ENCODE measurements at regions of chr11 and their contacts with region 1.

Region 1: GRCh38 chr11:62169091-62169847 is 20.7 kb upstream of the SCGB1D1 start:
- DNase-seq: no peak
- H3K4me3 Mint-ChIP-seq: no peak overlapping the region
- H3K27ac Mint-ChIP-seq: no peak overlapping the region
- H3K4me1 Mint-ChIP-seq: peaks cover 4% of the 10 kb centered on the region
- H3K27me3 Mint-ChIP-seq: peaks cover 36% of the 10 kb centered on the region

Region 2: GRCh38 chr11:62157603-62158002 is 11.7 kb before region 1 on chr11:
- intact Hi-C with region 1: no loop called
- DNase-seq: no peak
- H3K4me3 Mint-ChIP-seq: no peak overlapping the region
- H3K27ac Mint-ChIP-seq: no peak overlapping the region
- H3K4me1 Mint-ChIP-seq: no peaks in the 10 kb centered on the region
- H3K27me3 Mint-ChIP-seq: peaks cover 32% of the 10 kb centered on the region

Region 3: GRCh38 chr11:62208785-62209144 is 39.5 kb after region 1 on chr11:
- intact Hi-C with region 1: loop called (anchors 2 kb)
- DNase-seq: no peak
- H3K4me3 Mint-ChIP-seq: no peak overlapping the region
- H3K27ac Mint-ChIP-seq: no peak overlapping the region
- H3K4me1 Mint-ChIP-seq: no peaks in the 10 kb centered on the region
- H3K27me3 Mint-ChIP-seq: no peaks in the 10 kb centered on the region

Region 4: DNA sequence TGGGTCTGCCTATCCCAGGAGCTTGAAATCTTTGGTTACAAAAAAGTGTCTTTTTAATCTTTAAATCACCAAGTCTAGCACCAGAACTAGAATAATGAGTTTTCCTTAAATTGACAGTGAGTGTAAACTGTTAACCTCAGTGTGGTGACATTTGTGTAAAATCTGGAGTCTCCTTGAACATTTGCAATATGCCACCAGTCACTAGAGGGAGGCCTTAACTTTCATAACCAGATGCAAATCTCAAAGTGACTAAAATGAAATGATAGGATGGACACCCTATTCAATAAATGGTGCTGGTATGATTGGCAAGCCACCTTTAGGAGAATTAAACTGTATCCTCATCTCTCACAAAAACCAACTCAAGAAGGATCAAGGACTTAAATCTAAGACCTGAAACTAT is 64.5 kb after region 1 on chr11:
- intact Hi-C with region 1: no loop called
- DNase-seq: no peak
- H3K4me3 Mint-ChIP-seq: no peak overlapping the region
- H3K27ac Mint-ChIP-seq: no peak overlapping the region
- H3K4me1 Mint-ChIP-seq: no peaks in the 10 kb centered on the region
- H3K27me3 Mint-ChIP-seq: peaks cover 33% of the 10 kb centered on the region

Region 5: DNA sequence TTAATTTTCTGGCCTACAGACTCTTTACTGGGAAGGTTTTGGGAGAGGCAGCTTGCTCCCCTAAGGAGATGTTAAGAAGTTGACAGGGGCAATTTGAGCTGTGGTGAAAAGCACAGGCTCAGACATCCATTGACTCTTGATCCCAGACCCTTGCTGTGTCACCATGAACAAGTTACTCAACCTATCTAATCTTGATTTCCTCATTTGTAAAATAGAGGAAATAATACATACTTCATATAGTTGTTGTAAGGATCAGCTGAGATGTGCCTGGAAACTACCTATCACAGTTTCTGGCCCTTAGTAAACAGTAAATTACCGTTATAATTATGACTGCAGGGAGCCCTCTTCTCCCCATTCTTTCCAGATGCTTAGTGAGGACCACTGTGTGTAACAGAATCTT is 146.2 kb after region 1 on chr11:
- intact Hi-C with region 1: loop called (anchors 1 kb)
- DNase-seq: no peak
- H3K4me3 Mint-ChIP-seq: no peak overlapping the region
- H3K27ac Mint-ChIP-seq: no peak overlapping the region
- H3K4me1 Mint-ChIP-seq: peaks cover 8% of the 10 kb centered on the region
- H3K27me3 Mint-ChIP-seq: peaks cover 40% of the 10 kb centered on the region

Region 6: DNA sequence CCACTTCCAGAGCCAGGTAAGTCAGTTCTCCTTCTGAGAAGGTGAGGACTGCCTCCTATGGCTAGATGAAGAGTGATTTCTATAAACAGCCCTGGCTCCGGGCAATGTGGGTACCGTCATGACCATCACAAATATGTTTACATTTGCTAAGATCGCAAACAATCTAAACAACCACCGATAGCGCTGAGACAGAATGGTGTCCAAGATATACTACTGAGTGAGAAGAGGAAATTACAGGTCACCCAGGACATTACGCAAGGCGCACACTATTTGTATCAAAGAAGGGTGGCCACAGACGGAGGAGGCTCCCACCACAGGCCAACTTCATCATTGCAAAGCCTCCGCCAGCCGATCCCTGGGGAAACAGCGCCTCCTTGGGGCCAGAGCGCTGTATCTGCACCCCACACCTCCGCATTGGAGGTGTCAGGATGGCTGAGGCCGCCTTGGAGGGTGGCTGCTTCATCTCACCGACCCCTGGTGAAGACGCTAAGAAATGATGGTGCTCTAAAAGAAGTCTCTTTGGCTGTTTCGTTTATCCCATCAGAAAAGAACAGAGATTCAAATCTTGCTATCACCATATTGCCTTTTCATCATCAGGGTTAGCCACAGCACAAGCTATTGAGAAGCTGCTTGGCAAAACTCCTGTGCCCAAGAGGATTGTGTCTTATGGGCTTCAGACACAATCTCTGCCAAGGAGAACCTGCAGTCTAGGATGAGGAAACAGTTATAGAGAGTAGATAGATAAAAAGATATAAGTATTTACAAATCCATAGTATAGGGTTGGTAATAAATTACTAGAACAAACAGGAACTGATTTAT is 155.7 kb after region 1 on chr11:
- intact Hi-C with region 1: loop called (anchors 5 kb)
- DNase-seq: peak; percentile 85
- H3K4me3 Mint-ChIP-seq: no peak overlapping the region
- H3K27ac Mint-ChIP-seq: no peak overlapping the region
- H3K4me1 Mint-ChIP-seq: peaks cover 2% of the 10 kb centered on the region
- H3K27me3 Mint-ChIP-seq: peaks cover 11% of the 10 kb centered on the region

Region 7: DNA sequence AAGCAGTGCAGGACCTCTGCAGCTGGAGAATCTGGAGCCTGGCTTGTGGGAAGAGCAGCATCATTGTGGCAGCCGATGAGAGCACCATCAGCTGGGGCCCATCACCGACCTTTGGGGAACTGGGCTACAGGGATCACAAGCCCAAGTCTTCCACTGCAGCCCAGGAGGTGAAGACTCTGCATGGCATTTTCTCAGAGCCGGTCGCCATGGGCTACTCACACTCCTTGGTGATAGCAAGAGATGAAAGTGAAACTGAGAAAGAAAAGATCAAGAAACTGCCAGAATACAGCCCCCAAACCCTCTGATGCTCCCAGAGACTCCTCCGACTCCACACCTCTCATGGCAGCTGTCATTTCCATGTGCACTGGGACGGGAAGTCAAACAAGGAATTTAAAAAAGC is 203.6 kb after region 1 on chr11:
- intact Hi-C with region 1: loop called (anchors 1 kb)
- DNase-seq: peak; percentile 69
- H3K4me3 Mint-ChIP-seq: no peak overlapping the region
- H3K27ac Mint-ChIP-seq: no peak overlapping the region
- H3K4me1 Mint-ChIP-seq: peaks cover 12% of the 10 kb centered on the region
- H3K27me3 Mint-ChIP-seq: no peaks in the 10 kb centered on the region

Measured in activated CD4-positive, alpha-beta T cell treated with anti-CD3 and anti-CD28 coated beads, Interleukin-2, amount 10 ng/mL, durations not matched to agents 24 days and 14 days (primary cell).